Caco-2 (cell line): ENCODE measurements at regions of chr13 and their contacts with region 1.

Region 1: DNA sequence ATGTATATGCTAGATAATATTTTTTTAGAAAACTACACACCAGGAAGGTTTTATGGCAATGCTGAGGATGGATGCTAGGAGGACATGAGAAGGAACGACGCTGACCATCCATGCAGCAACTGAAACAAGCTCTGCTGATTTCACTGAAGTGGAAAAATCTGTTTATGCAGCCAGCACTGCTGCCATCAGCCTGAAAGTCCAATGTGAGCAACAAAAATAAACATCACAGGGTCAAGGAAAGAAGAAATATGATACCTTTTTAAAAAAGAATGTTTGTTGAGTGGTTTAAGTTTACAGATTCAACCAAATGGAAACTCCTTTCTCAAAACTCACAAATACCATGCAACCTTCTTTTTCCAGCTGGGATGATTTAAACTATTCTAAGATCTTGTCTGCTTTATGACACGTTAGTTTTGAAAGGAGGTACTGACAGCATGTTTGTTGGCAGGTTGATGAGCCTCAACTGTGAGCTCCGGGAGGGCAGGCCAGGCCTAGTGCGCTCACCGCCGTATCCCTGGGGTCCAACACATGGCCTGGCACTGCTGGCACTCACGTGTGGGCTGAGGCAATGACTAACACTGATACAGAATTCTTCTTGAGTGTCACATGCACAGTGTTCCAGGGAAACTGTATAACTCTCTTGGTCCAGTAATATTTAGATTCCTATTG is 46.8 kb downstream of the LATS2 start:
- DNase-seq: no peak
- H3K4me3 ChIP-seq: no peak overlapping the region
- H3K4me3 Mint-ChIP-seq: no peak overlapping the region
- H3K27ac Mint-ChIP-seq: peak overlapping the region; percentile 59
- H3K4me1 ChIP-seq: peaks cover 40% of the 10 kb centered on the region
- H3K4me1 Mint-ChIP-seq: peaks cover 46% of the 10 kb centered on the region
- H3K27me3 ChIP-seq: no peaks in the 10 kb centered on the region
- H3K27me3 Mint-ChIP-seq: no peaks in the 10 kb centered on the region
- CTCF ChIP-seq: no peak

Region 2: GRCh38 chr13:20953245-20953931 is 61.2 kb before region 1 on chr13:
- CTCF ChIA-PET with region 1: no interaction called
- POLR2A ChIA-PET with region 1: no interaction called
- intact Hi-C with region 1: loop called (anchors 5 kb)
- DNase-seq: peak; percentile 64 to 68
- H3K4me3 ChIP-seq: no peak overlapping the region
- H3K4me3 Mint-ChIP-seq: peak overlapping the region; percentile 61
- H3K27ac Mint-ChIP-seq: peak overlapping the region; percentile 28
- H3K4me1 ChIP-seq: peaks cover 40% of the 10 kb centered on the region
- H3K4me1 Mint-ChIP-seq: peaks cover 41% of the 10 kb centered on the region
- H3K27me3 ChIP-seq: no peaks in the 10 kb centered on the region
- H3K27me3 Mint-ChIP-seq: no peaks in the 10 kb centered on the region
- CTCF ChIP-seq: no peak

Region 3: GRCh38 chr13:21047596-21048283 is 33.1 kb after region 1 on chr13:
- CTCF ChIA-PET with region 1: no interaction called
- POLR2A ChIA-PET with region 1: no interaction called
- intact Hi-C with region 1: loop called (anchors 5 kb)
- DNase-seq: no peak
- H3K4me3 ChIP-seq: no peak overlapping the region
- H3K4me3 Mint-ChIP-seq: no peak overlapping the region
- H3K27ac Mint-ChIP-seq: peak overlapping the region; percentile 22
- H3K4me1 ChIP-seq: peaks cover 9% of the 10 kb centered on the region; the same call in 1 of the 2 replicates
- H3K4me1 Mint-ChIP-seq: peaks cover 29% of the 10 kb centered on the region
- H3K27me3 ChIP-seq: no peaks in the 10 kb centered on the region
- H3K27me3 Mint-ChIP-seq: no peaks in the 10 kb centered on the region
- CTCF ChIP-seq: no peak